CD8-positive, alpha-beta memory T cell (primary cell): ENCODE measurements at regions of chr2 and their contacts with region 1.

Region 1: DNA sequence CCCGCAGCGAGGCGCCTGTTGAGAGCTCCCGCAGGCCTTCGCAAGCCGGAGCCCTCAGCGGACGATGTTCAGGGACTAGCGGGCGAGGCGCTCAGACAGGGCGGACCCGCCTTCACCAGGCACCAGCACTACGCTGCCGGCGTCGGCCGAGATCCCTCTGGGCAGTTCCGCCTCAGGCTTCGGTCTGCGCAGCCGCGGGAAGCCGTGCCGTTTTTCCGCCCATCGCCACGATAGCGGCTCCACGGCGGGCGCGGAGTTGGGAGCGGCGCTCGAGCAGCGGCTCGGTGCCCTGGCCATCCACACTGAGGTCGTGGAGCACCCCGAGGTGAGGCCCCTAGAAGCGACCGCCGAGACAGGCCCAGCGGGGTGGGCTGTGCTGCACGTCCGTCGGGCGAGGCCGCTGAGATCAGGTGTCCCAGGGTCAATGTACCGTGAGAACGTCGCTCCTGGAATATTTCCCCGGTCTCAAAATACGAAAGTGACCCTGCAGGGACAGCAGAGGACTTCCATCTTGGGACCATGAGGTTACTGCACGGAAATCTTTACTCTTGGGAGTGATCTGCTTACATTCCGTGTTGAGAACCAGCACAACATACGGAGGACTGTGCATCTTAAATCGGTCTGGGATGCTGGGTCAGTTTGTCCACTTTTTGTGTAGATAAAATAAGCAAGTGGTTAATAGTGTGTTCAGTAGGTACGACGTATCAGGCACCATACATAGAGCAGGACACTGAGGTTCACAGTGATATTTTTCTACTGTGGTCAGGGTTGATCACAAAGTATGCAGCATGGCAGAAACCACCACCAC is 13.3 kb upstream of the MTIF2 start:
- DNase-seq: peak; percentile 81 to 92 (median 85)
- H3K4me3 ChIP-seq: peak overlapping the region; percentile 84
- H3K4me3 Mint-ChIP-seq: peak overlapping the region; percentile 90 to 97 (median 92)
- H3K27ac ChIP-seq: peak overlapping the region; percentile 89
- H3K27ac Mint-ChIP-seq: peak overlapping the region; percentile 93 to 100 (median 98)
- H3K4me1 ChIP-seq: peaks cover 18% of the 10 kb centered on the region
- H3K4me1 Mint-ChIP-seq: peaks cover 26 to 50% (median 30%) of the 10 kb centered on the region in 3 donors
- H3K27me3 ChIP-seq: no peaks in the 10 kb centered on the region
- H3K27me3 Mint-ChIP-seq: no peaks in the 10 kb centered on the region

Region 2: GRCh38 chr2:55268907-55269644 is 13.2 kb before region 1 on chr2 and contains the start of gene MTIF2:
- CTCF ChIA-PET with region 1: no interaction called
- POLR2A ChIA-PET with region 1: interaction called, 14 read pairs
- DNase-seq: peak; percentile 81 to 89 (median 83)
- H3K4me3 ChIP-seq: peak within 1 kb of the TSS; percentile 84
- H3K4me3 Mint-ChIP-seq: peak within 1 kb of the TSS; percentile 93 to 99 (median 95)
- H3K27ac ChIP-seq: peak within 1 kb of the TSS; percentile 86
- H3K27ac Mint-ChIP-seq: peak within 1 kb of the TSS; percentile 95 to 99 (median 97)
- H3K4me1 ChIP-seq: peaks cover 17% of the 10 kb centered on the region
- H3K4me1 Mint-ChIP-seq: peaks cover 17 to 31% (median 28%) of the 10 kb centered on the region in 3 donors
- H3K27me3 ChIP-seq: no peaks in the 10 kb centered on the region
- H3K27me3 Mint-ChIP-seq: peaks cover 4 to 5% of the 10 kb centered on the region in 2 donors
- total RNA-seq, gene MTIF2: 58.3 to 58.9 TPM

Region 3: DNA sequence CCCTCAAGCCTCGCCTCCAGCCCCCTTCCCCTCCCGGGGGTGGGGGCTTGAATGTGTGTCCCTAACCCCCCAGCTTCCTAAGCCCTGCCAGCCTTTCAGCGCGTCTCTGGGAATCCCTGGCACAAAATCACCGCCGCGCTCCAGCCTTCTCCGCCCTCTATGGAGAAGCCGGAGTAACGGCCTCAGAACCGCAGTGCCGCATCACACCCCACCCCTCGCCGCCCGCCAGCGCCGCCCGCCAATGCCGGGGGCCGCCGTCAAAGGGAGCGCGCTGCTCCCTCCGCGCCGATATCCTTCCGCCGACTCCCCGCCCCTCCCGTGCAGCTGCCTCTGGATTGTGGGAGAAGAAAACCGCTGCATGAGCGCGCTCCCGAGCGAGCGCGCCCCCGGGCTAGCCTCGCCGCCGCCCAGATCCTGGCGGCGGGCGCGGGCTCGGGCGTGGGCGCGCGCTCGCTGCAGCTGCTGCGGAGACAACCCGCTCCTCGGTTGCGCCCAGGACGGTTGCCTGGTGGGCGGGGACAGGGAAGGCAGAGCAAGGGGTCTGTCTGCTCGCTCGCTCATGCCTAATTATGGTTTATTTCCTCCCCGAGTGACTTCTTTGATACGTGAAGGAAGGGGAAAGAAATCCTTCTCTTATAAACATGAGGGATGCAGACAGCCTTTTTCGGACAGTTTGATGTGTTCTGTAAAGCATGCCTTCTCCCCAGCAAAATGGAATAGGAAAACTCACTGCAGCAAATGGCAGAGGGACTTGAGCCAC is 137.5 kb after region 1 on chr2 and contains the start of gene CCDC88A:
- CTCF ChIA-PET with region 1: no interaction called
- POLR2A ChIA-PET with region 1: no interaction called
- DNase-seq: peak; percentile 80 to 89 (median 85)
- H3K4me3 ChIP-seq: peak within 1 kb of the TSS; percentile 88
- H3K4me3 Mint-ChIP-seq: peak within 1 kb of the TSS; percentile 85 to 96 (median 93)
- H3K27ac ChIP-seq: peak within 1 kb of the TSS; percentile 74
- H3K27ac Mint-ChIP-seq: peak within 1 kb of the TSS; percentile 87 to 97 (median 94)
- H3K4me1 ChIP-seq: peaks cover 17% of the 10 kb centered on the region
- H3K4me1 Mint-ChIP-seq: peaks cover 32 to 52% (median 49%) of the 10 kb centered on the region in 3 donors
- H3K27me3 ChIP-seq: no peaks in the 10 kb centered on the region
- H3K27me3 Mint-ChIP-seq: peaks cover 6 to 8% of the 10 kb centered on the region in 2 donors
- total RNA-seq, gene CCDC88A: 9.5 to 10.7 TPM